CD8-positive, alpha-beta T cell (primary cell): ENCODE measurements at regions of chr14 and their contacts with region 1.

Region 1: DNA sequence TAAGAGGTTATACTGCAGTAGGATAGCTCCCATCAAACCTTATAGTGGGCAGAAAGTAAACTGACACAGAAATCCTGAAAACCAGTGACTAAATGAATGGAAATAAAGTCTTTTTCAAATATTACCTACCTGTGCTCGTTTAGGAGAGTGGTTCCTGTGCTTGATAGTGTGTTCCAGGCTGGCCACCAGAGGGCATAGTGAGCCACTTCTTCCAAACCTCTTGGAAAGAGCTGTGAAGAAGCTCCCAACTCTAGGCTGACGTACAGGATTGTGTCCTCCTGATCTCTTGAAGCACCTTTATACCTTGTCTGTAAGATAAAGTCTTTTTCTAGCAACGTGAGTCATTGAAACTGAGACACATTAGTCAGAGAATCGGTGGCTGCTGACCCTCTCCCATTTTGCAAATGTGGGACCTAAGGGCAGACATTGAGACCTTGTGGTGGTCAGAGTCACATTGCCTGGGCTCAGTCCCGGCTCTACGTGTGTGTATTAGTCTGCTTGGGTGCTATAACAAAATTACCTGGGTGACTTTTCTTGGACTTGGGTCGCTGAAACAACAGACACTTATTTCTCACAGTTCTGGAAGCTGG is 17.6 kb downstream of the TDP1 start:
- DNase-seq: peak in 8 of 9 experiments; percentile 19 to 62 (median 50)
- ATAC-seq: peak; percentile 61
- H3K4me3 ChIP-seq: no peak overlapping the region
- H3K4me3 Mint-ChIP-seq: no peak overlapping the region
- H3K27ac ChIP-seq: no peak overlapping the region
- H3K27ac Mint-ChIP-seq: no peak overlapping the region
- H3K4me1 ChIP-seq: no peaks in the 10 kb centered on the region
- H3K4me1 Mint-ChIP-seq: peaks cover 6% of the 10 kb centered on the region
- H3K27me3 ChIP-seq: no peaks in the 10 kb centered on the region
- H3K27me3 Mint-ChIP-seq: no peaks in the 10 kb centered on the region
- CTCF ChIP-seq: peak; percentile 67

Region 2: GRCh38 chr14:89890589-89890988 is 82.7 kb before region 1 on chr14:
- CTCF ChIA-PET with region 1: no interaction called
- POLR2A ChIA-PET with region 1: no interaction called
- intact Hi-C with region 1: no loop called
- DNase-seq: no peak
- ATAC-seq: no peak
- H3K4me3 ChIP-seq: no peak overlapping the region
- H3K4me3 Mint-ChIP-seq: no peak overlapping the region
- H3K27ac ChIP-seq: no peak overlapping the region
- H3K27ac Mint-ChIP-seq: no peak overlapping the region
- H3K4me1 ChIP-seq: no peaks in the 10 kb centered on the region
- H3K4me1 Mint-ChIP-seq: no peaks in the 10 kb centered on the region
- H3K27me3 ChIP-seq: no peaks in the 10 kb centered on the region
- H3K27me3 Mint-ChIP-seq: no peaks in the 10 kb centered on the region
- CTCF ChIP-seq: no peak

Region 3: GRCh38 chr14:89936658-89937185 is 36.6 kb before region 1 on chr14:
- CTCF ChIA-PET with region 1: interaction called, 32 read pairs
- POLR2A ChIA-PET with region 1: no interaction called
- intact Hi-C with region 1: loop called (anchors 1 to 2 kb)
- DNase-seq: no peak
- ATAC-seq: no peak
- H3K4me3 ChIP-seq: no peak overlapping the region
- H3K4me3 Mint-ChIP-seq: no peak overlapping the region
- H3K27ac ChIP-seq: no peak overlapping the region
- H3K27ac Mint-ChIP-seq: no peak overlapping the region
- H3K4me1 ChIP-seq: no peaks in the 10 kb centered on the region
- H3K4me1 Mint-ChIP-seq: no peaks in the 10 kb centered on the region
- H3K27me3 ChIP-seq: no peaks in the 10 kb centered on the region
- H3K27me3 Mint-ChIP-seq: no peaks in the 10 kb centered on the region
- CTCF ChIP-seq: no peak

Region 4: DNA sequence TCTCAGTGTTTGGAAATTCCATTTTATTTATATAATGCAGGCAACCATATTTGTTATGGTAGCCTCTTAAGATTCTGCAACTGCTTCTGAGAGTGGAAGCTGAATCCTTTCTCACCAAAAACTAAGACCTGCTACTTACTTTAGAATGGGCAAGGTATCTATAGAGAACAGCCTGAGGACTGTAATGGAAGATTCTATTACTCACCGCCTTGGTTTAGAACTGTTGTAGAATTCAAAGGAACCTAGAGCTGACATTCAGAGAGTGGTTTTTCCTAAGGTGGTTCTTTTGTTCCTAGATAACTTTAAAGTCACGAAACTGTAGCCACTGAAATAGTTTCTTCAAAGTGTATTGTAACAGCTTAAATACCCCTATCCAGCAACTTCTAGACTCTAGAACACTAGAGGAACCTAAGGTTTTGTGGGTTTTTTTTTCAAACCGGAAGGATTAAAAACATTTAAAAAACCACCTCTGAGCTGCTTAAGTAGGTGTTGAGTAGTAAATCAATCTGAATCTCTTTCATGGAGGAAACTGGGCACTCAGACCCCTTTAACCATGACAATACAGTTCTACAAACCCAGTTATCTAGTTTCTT is 13.4 kb before region 1 on chr14:
- CTCF ChIA-PET with region 1: interaction called, 15 read pairs
- POLR2A ChIA-PET with region 1: interaction called, 3 read pairs
- intact Hi-C with region 1: loop called in 1 of 2 experiments (anchors 1 kb)
- DNase-seq: peak in 2 of 9 experiments; percentile 41 to 62
- ATAC-seq: peak; percentile 4
- H3K4me3 ChIP-seq: no peak overlapping the region
- H3K4me3 Mint-ChIP-seq: peak overlapping the region; percentile 56
- H3K27ac ChIP-seq: peak overlapping the region in 1 of 2 experiments; percentile 17
- H3K27ac Mint-ChIP-seq: peak overlapping the region; percentile 88
- H3K4me1 ChIP-seq: peaks cover 52% of the 10 kb centered on the region
- H3K4me1 Mint-ChIP-seq: peaks cover 68% of the 10 kb centered on the region
- H3K27me3 ChIP-seq: no peaks in the 10 kb centered on the region
- H3K27me3 Mint-ChIP-seq: no peaks in the 10 kb centered on the region
- CTCF ChIP-seq: no peak

Region 5: GRCh38 chr14:89983375-89983774 is 10.0 kb after region 1 on chr14:
- CTCF ChIA-PET with region 1: interaction called, 39 read pairs
- POLR2A ChIA-PET with region 1: interaction called, 4 read pairs
- intact Hi-C with region 1: no loop called
- DNase-seq: no peak
- ATAC-seq: no peak
- H3K4me3 ChIP-seq: no peak overlapping the region
- H3K4me3 Mint-ChIP-seq: no peak overlapping the region
- H3K27ac ChIP-seq: no peak overlapping the region
- H3K27ac Mint-ChIP-seq: no peak overlapping the region
- H3K4me1 ChIP-seq: no peaks in the 10 kb centered on the region
- H3K4me1 Mint-ChIP-seq: no peaks in the 10 kb centered on the region
- H3K27me3 ChIP-seq: no peaks in the 10 kb centered on the region
- H3K27me3 Mint-ChIP-seq: no peaks in the 10 kb centered on the region
- CTCF ChIP-seq: no peak